ENCODE measurements at regions of chr15 and their contacts with region 1.

Region 1: DNA sequence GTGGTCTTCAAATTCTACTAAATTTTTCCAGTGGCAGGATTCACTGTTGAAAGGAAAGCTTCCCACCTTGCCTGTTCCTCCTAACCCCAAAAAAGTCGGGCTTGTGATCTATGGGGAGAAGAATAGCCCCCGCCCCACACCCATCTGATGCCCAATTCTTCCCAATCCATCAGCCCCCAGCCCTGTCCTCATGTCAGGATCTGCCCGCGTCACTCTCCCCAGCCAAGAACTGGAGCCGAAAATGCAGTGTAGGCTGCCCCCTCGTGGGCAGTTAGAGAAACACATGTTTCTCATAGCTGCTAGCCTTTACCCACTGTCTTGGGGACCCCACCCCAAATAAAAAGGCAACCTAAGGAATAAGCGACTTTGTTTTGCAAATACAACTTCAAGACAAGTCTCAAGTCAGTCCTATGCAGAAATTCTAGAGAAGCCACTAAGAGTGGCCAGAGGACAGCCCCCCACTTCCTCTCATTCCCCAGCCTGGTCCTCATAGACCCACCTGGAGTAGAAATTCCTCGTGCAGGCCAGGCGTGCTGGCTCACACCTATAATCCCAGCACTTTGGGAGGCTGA is 13.0 kb upstream of the CSK start:
- DNase-seq: peak; percentile 72

Region 2: DNA sequence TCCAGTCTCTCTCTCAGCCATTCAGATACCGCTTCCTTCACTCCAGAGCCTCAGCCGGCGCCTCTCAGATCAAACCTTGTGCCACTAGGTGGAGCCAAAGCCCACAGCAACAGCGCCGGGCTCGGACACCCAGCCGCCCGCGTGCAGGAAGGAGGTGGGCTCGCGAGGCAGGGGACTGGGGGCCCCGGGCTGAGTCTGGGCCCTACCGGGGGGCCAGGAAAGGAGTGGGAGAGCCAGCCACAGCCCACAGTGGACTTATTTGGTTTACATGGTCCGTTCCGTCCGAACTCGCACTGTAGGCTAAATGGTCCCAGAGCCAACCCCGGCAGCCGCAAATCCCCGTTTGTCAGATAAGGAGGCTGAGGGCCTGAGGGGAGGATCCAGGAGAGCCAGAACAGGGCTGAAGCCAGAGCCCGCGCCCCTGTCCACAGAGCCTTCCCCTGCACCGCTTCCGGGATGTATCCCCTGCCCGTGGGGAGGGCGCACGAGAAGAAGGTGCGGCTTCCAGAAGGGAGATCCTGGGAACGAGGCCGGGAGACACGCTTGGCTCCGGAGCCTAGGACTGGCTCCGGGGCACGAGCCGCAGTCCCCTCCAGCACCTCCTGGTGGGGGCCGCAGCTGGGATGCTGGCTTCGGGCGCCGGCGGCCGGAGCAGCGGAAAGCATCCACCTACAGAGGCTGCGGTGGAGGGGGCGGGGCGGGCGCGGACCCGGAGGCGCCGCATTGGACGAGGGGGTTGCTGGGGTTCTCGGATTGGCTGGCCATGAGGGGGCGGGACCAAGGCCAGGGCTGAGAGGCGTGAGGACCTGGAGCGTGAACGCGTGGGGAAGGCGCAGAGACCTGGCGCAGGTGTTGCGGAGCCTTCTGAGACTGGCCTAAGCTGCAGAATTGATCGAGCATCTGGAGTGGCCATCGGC is 394.9 kb before region 1 on chr15:
- in situ Hi-C with region 1: loop called (anchors 25 kb)
- DNase-seq: peak; percentile 92

Region 3: GRCh38 chr15:74631408-74632247 is 137.2 kb before region 1 on chr15:
- in situ Hi-C with region 1: loop called (anchors 5 kb)
- DNase-seq: peak; percentile 70

Region 4: GRCh38 chr15:74842581-74843444 is 74.0 kb after region 1 on chr15 and contains the start of gene ULK3:
- in situ Hi-C with region 1: loop called (anchors 5 kb)
- DNase-seq: peak; percentile 91
- total RNA-seq, gene ULK3: 32.1 and 40.9 TPM in 2 replicates

Measured in G401 (cell line).